ENCODE measurements at regions of chr3 and their contacts with region 1.

Region 1: DNA sequence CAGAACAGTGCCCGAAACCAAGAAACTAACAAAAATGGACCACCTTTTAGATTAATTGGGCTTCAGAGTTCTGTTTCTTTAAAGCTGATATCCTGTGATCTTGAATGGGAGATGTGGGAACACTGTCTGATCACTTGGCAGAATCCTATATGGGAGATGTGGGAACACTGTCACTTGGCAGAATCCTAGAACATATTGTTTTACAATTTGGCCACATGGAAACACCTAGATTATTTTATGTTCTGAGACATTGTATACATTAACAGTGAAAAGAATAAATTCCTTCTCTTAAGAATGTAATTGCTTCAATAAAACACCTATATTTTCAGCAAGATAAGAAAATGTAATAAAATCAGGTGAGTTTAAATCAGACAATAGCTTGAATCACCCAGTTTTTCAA is 30.3 kb upstream of the PLSCR2 start:
- DNase-seq: no peak
- ATAC-seq: no peak
- H3K4me3 ChIP-seq: no peak overlapping the region
- H3K27ac ChIP-seq: 0 out of 2 replicates have a peak overlapping the region, but pooled peaks have one; percentile 6
- H3K4me1 ChIP-seq: peaks cover 7% of the 10 kb centered on the region; the same call in 1 of the 2 replicates
- H3K27me3 ChIP-seq: no peaks in the 10 kb centered on the region
- CTCF ChIP-seq: no peak

Region 2: GRCh38 chr3:145272684-145273083 is 1227.0 kb before region 1 on chr3:
- CTCF ChIA-PET with region 1: no interaction called
- POLR2A ChIA-PET with region 1: no interaction called
- in situ Hi-C with region 1: no loop called
- intact Hi-C with region 1: no loop called
- DNase-seq: no peak
- ATAC-seq: no peak
- H3K4me3 ChIP-seq: no peak overlapping the region
- H3K27ac ChIP-seq: no peak overlapping the region
- H3K4me1 ChIP-seq: no peaks in the 10 kb centered on the region
- H3K27me3 ChIP-seq: no peaks in the 10 kb centered on the region
- CTCF ChIP-seq: no peak

Region 3: DNA sequence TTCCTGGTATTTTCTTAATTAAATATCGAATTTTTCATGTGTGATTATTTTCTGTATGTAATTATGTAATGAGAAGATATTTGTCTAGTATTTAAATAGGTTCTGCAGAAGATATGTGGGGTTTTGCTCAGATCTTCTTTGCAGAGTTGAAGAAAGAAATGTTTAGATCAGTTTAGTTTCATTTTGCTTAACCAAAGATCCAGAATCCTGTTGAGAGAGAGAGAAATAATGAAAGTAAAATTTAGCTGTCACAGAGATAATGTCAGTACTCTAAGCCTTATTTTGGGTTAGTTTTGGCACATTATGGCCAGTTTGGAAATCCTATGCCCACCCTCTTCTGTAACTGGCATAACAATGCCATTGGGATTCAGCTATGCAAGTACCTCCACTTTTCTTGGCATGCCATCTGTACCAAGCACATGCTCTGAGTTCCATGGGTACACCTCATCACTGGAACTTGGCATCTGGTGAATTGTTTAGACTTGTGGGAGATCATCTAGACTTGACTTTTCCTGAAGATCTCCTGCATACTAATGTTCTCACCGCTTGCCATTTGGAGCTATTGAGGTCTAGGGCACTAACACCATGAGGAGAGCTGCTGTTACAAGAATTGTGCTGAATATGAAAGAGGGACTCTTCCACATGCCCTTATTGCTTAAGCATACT is 13.8 kb after region 1 on chr3:
- CTCF ChIA-PET with region 1: no interaction called
- POLR2A ChIA-PET with region 1: interaction called, 16 read pairs
- in situ Hi-C with region 1: no loop called
- intact Hi-C with region 1: no loop called
- DNase-seq: no peak
- ATAC-seq: no peak
- H3K4me3 ChIP-seq: no peak overlapping the region
- H3K27ac ChIP-seq: no peak overlapping the region
- H3K4me1 ChIP-seq: no peaks in the 10 kb centered on the region
- H3K27me3 ChIP-seq: no peaks in the 10 kb centered on the region
- CTCF ChIP-seq: no peak

Region 4: DNA sequence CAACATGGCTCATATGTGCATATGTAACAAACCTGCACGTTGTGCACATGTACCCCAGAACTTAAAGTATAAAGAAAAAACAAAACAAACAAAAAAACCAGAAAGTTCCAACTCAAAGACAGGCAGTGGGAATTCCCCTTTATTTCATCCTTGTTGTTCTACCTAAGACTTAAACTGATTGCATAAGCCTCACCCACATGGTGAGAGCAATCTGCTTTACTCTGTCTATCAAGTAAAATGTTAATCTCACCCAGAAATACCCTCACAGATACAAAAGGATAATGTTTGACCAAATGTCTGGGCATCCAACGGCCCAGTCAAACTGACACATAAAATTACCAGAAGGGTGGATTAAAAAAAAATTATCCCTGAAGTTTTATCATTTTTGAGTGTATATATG is 296.4 kb after region 1 on chr3:
- CTCF ChIA-PET with region 1: no interaction called
- POLR2A ChIA-PET with region 1: no interaction called
- in situ Hi-C with region 1: no loop called
- intact Hi-C with region 1: no loop called
- DNase-seq: no peak
- ATAC-seq: no peak
- H3K4me3 ChIP-seq: no peak overlapping the region
- H3K27ac ChIP-seq: no peak overlapping the region
- H3K4me1 ChIP-seq: no peaks in the 10 kb centered on the region
- H3K27me3 ChIP-seq: no peaks in the 10 kb centered on the region
- CTCF ChIP-seq: no peak